Mammary epithelial cell (primary cell): ENCODE measurements at regions of chr2 and their contacts with region 1.

Region 1: GRCh38 chr2:16713011-16713423 is 47.4 kb upstream of the CYRIA start:
- DNase-seq: no peak
- H3K4me3 ChIP-seq: no peak overlapping the region
- H3K27ac ChIP-seq: no peak overlapping the region
- H3K4me1 ChIP-seq: no peaks in the 10 kb centered on the region
- H3K27me3 ChIP-seq: no peaks in the 10 kb centered on the region
- CTCF ChIP-seq: no peak

Region 2: DNA sequence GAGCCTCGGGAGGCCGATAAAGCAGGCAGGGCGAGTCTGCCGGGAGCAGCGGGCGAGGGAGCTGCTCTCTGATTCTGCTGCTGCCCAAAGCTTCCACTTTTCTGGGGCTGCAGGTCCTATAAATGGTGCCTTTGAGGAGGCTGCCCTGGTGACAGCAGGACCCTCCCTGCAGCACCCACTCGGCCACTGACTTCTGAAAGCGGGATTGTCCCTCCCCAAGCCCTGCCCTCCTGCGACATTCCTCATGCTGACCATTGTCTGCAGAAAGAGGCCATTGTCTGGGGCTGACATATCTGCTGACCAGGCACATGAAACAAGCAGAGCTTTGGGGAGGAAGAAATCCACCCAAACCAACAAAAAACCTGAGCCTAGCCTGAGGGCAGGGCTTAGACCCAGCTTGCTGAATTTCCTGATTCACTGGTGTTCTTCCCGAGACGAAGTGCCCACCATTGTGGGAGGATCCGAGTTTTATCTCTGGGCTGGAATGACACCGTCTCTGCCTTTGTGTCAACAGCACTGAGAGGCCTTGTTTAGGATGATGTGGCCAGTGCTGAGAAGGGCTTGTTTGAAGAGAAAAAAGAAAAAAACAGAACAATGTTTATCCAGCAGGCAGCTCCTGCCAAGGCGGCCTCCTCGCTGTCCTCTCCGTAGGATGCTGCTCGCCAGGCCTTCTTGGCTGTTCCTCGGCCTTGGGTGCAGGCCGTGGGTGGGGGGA is 642.9 kb before region 1 on chr2:
- CTCF ChIA-PET with region 1: no interaction called
- dilution Hi-C with region 1: no loop called
- in situ Hi-C with region 1: no loop called
- intact Hi-C with region 1: no loop called
- DNase-seq: peak; percentile 11
- H3K4me3 ChIP-seq: no peak overlapping the region
- H3K27ac ChIP-seq: no peak overlapping the region
- H3K4me1 ChIP-seq: no peaks in the 10 kb centered on the region
- H3K27me3 ChIP-seq: no peaks in the 10 kb centered on the region
- CTCF ChIP-seq: no peak

Region 3: GRCh38 chr2:16630463-16630862 is 82.6 kb before region 1 on chr2:
- CTCF ChIA-PET with region 1: no interaction called
- dilution Hi-C with region 1: loop called (anchors 5 kb)
- in situ Hi-C with region 1: no loop called
- intact Hi-C with region 1: no loop called
- DNase-seq: no peak
- H3K4me3 ChIP-seq: no peak overlapping the region
- H3K27ac ChIP-seq: no peak overlapping the region
- H3K4me1 ChIP-seq: peaks cover 6% of the 10 kb centered on the region
- H3K27me3 ChIP-seq: no peaks in the 10 kb centered on the region
- CTCF ChIP-seq: no peak

Region 4: DNA sequence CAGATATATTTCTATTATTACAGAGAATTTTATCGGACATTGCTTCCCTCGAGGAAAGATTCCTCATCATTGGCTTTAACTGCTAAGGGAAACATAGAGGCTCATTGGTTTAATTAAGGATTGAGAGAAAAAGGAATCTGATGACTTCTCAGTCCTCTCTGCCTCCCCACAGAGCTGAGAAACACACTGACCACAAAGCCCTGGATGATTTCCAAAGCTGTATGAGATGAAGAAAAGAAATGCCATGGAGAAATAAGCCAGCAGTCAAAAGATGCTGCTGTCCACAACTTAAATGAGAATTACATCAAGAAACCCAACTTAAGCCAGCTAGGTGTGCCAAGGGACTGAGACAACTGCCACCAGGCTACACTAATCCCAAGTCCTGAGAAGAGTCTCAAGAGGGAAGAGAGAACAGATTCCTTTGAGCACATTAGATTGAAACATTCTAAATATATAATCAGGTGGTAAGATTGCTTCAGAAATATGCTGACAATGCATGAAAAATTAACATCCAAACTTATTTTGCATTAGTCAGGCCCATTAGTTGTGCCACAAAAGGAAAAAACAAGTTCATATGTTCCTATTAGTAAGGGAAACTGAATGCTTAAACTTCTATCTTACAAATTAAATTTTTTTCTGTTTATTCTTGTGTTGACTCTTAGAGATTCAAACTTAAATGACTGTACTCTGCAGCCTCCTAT is 260.7 kb after region 1 on chr2:
- CTCF ChIA-PET with region 1: no interaction called
- dilution Hi-C with region 1: no loop called
- in situ Hi-C with region 1: no loop called
- intact Hi-C with region 1: no loop called
- DNase-seq: no peak
- H3K4me3 ChIP-seq: no peak overlapping the region
- H3K27ac ChIP-seq: no peak overlapping the region
- H3K4me1 ChIP-seq: no peaks in the 10 kb centered on the region
- H3K27me3 ChIP-seq: peaks cover 3% of the 10 kb centered on the region
- CTCF ChIP-seq: no peak

Region 5: GRCh38 chr2:17059458-17059857 is 346.4 kb after region 1 on chr2:
- CTCF ChIA-PET with region 1: no interaction called
- dilution Hi-C with region 1: no loop called
- in situ Hi-C with region 1: no loop called
- intact Hi-C with region 1: no loop called
- DNase-seq: no peak
- H3K4me3 ChIP-seq: no peak overlapping the region
- H3K27ac ChIP-seq: no peak overlapping the region
- H3K4me1 ChIP-seq: no peaks in the 10 kb centered on the region
- H3K27me3 ChIP-seq: no peaks in the 10 kb centered on the region
- CTCF ChIP-seq: no peak